CD4-positive, alpha-beta T cell (primary cell): ENCODE measurements at regions of chr3 and their contacts with region 1.

Region 1: DNA sequence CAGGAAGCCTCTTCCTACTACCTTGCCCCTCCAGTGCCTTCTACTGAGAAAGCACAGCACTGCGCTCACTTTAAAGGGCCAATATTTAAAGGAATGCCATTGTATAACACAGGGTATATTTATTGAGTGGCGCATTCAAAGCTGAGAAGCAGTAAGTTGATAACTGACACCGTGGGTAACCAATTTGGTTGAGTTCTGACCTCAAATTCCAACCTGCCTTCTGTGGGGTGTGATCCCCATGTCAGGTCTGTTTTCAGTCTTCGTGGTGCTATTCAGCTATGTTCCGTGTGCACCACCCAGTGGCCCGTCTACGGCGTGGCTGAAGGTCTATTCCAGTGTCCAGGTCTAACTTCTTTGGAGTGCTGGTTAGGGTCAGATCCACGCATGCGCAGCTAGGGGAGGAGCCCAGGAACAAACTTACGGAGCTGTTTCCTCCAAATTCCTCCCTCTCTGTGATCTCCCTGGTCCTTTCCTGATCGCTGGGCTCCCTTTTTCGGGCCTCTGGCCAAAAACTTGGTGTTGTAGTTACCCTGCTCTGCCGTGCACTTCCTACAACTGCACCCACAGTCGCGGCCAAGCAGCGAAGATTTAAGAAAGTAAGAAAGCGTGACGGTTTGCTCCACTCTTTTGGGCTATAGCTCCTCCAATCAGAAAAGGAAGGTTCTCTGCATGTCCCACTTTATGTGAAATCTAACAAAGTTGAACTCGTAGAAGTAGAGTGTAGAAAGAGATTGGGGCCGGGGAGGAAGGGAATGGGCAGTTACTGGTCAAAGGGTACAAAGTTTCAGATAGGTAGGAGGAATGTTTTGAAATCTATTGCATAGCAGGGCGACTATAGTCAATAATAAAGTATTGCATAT is 7.7 kb downstream of the LRRC2 start:
- DNase-seq: peak; percentile 60 to 91 (median 73)
- ATAC-seq: peak; percentile 98
- H3K4me3 ChIP-seq: peak overlapping the region; percentile 53
- H3K4me3 Mint-ChIP-seq: peak overlapping the region; percentile 76
- H3K27ac ChIP-seq: no peak overlapping the region
- H3K27ac Mint-ChIP-seq: peak overlapping the region; percentile 54
- H3K4me1 ChIP-seq: peaks cover 12% of the 10 kb centered on the region
- H3K4me1 Mint-ChIP-seq: peaks cover 13% of the 10 kb centered on the region
- H3K27me3 ChIP-seq: no peaks in the 10 kb centered on the region
- H3K27me3 Mint-ChIP-seq: no peaks in the 10 kb centered on the region
- CTCF ChIP-seq: peak; percentile 91

Region 2: GRCh38 chr3:46276502-46277099 is 281.8 kb before region 1 on chr3:
- CTCF ChIA-PET with region 1: no interaction called
- POLR2A ChIA-PET with region 1: no interaction called
- intact Hi-C with region 1: loop called (anchors 5 kb)
- DNase-seq: peak; percentile 53 to 87 (median 70)
- ATAC-seq: peak; percentile 82
- H3K4me3 ChIP-seq: no peak overlapping the region
- H3K4me3 Mint-ChIP-seq: no peak overlapping the region
- H3K27ac ChIP-seq: no peak overlapping the region
- H3K27ac Mint-ChIP-seq: no peak overlapping the region
- H3K4me1 ChIP-seq: peaks cover 40% of the 10 kb centered on the region
- H3K4me1 Mint-ChIP-seq: peaks cover 29% of the 10 kb centered on the region
- H3K27me3 ChIP-seq: no peaks in the 10 kb centered on the region
- H3K27me3 Mint-ChIP-seq: no peaks in the 10 kb centered on the region
- CTCF ChIP-seq: peak; percentile 72

Region 3: GRCh38 chr3:46297658-46298463 is 260.6 kb before region 1 on chr3:
- CTCF ChIA-PET with region 1: no interaction called
- POLR2A ChIA-PET with region 1: no interaction called
- intact Hi-C with region 1: no loop called
- DNase-seq: no peak
- ATAC-seq: no peak
- H3K4me3 ChIP-seq: no peak overlapping the region
- H3K4me3 Mint-ChIP-seq: no peak overlapping the region
- H3K27ac ChIP-seq: peak overlapping the region in 1 of 2 donors; percentile 33
- H3K27ac Mint-ChIP-seq: peak overlapping the region; percentile 43
- H3K4me1 ChIP-seq: peaks cover 81% of the 10 kb centered on the region
- H3K4me1 Mint-ChIP-seq: peaks cover 80% of the 10 kb centered on the region
- H3K27me3 ChIP-seq: no peaks in the 10 kb centered on the region
- H3K27me3 Mint-ChIP-seq: no peaks in the 10 kb centered on the region
- CTCF ChIP-seq: no peak

Region 4: DNA sequence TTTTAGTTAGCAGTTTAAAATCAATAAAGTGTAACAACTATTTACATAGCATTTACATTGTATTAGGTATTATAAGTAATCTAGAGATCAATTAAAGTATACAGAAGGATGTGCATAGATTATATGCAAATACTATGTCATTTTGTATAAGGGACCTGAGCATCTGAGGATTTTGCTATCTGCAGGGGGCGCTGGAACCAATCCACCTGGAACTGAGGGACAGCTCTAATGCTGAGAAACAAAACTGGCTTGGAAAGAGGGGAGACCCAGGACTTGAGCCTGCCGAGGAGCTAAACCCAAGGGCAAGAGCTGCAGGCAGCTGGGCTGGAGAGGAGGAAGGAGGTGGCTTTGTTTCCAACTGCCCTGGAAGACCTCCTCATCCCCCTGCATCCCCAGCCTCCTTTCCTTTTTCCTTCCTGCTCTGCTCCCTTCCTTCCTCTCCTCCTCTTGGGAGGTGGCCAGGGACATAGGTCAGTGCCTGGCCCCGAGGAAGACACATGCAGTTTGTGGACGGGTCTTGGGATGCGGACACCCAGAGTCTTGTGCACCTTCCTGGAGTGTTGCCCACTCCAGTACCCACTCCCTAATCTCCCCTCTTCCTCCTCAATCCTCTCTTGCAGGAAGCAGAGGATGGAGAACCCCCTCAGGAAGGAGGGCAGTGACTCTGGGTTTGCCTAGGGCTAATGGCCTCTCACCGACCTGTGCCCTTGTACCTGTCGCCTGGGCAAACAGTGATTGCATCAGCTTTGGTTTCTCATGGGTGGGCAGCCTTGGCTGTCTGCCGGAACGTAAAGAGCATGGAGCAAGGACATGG is 61.5 kb before region 1 on chr3:
- CTCF ChIA-PET with region 1: interaction called, 43 read pairs
- POLR2A ChIA-PET with region 1: no interaction called
- intact Hi-C with region 1: loop called (anchors 2 kb)
- DNase-seq: peak; percentile 34 to 85 (median 56)
- ATAC-seq: peak; percentile 67
- H3K4me3 ChIP-seq: no peak overlapping the region
- H3K4me3 Mint-ChIP-seq: no peak overlapping the region
- H3K27ac ChIP-seq: no peak overlapping the region
- H3K27ac Mint-ChIP-seq: no peak overlapping the region
- H3K4me1 ChIP-seq: peaks cover 11% of the 10 kb centered on the region
- H3K4me1 Mint-ChIP-seq: peaks cover 32% of the 10 kb centered on the region
- H3K27me3 ChIP-seq: no peaks in the 10 kb centered on the region
- H3K27me3 Mint-ChIP-seq: no peaks in the 10 kb centered on the region
- CTCF ChIP-seq: peak; percentile 65

Region 5: DNA sequence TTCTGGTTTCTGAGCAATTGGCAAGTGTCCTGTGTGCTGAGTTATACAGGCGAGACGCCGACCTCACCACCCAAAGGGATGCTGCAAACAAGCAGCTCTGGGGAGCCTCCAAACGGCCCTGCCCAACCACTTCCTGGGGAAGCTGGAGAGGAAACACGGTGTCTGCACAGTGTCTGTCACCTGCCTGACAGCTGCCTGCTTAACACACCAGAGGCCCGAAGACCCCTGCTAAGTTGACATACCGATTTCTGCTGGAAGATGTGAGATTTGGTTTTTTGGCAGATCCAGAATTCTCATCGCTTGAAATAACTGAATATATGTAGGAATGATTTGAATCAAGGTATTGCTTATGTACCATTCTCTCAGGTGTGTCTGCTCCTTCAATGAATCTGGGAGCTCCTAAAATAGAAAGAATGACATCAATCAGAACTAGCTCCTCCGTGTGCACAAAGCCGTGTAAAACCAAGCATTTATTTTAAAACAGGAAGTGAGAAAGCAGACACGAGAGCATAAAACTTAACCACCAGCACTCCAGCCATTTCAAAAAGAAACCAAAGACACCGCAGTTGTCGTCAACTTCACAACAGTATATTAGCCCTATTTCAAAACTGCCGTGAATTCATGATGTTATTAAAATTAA is 19.5 kb before region 1 on chr3:
- CTCF ChIA-PET with region 1: interaction called, 58 read pairs
- POLR2A ChIA-PET with region 1: interaction called, 24 read pairs
- intact Hi-C with region 1: loop called in 1 of 2 experiments (anchors 1 kb)
- DNase-seq: peak; percentile 75 to 95 (median 86)
- ATAC-seq: peak; percentile 90
- H3K4me3 ChIP-seq: peak overlapping the region; percentile 44
- H3K4me3 Mint-ChIP-seq: peak overlapping the region; percentile 62
- H3K27ac ChIP-seq: peak overlapping the region; percentile 68 to 92
- H3K27ac Mint-ChIP-seq: peak overlapping the region; percentile 95
- H3K4me1 ChIP-seq: peaks cover 45% of the 10 kb centered on the region
- H3K4me1 Mint-ChIP-seq: peaks cover 56% of the 10 kb centered on the region
- H3K27me3 ChIP-seq: no peaks in the 10 kb centered on the region
- H3K27me3 Mint-ChIP-seq: no peaks in the 10 kb centered on the region
- CTCF ChIP-seq: no peak

Region 6: GRCh38 chr3:46629551-46630517 is 71.4 kb after region 1 on chr3:
- CTCF ChIA-PET with region 1: interaction called, 21 read pairs
- POLR2A ChIA-PET with region 1: no interaction called
- intact Hi-C with region 1: loop called (anchors 1 to 5 kb)
- DNase-seq: peak; percentile 65 to 90 (median 75)
- ATAC-seq: peak; percentile 95
- H3K4me3 ChIP-seq: peak overlapping the region; percentile 46
- H3K4me3 Mint-ChIP-seq: peak overlapping the region; percentile 76
- H3K27ac ChIP-seq: peak overlapping the region in 1 of 2 donors; percentile 10
- H3K27ac Mint-ChIP-seq: peak overlapping the region; percentile 89
- H3K4me1 ChIP-seq: peaks cover 20% of the 10 kb centered on the region
- H3K4me1 Mint-ChIP-seq: peaks cover 34% of the 10 kb centered on the region
- H3K27me3 ChIP-seq: no peaks in the 10 kb centered on the region
- H3K27me3 Mint-ChIP-seq: peaks cover 3% of the 10 kb centered on the region
- CTCF ChIP-seq: peak; percentile 100